Activated B cell treated with CpG ODN at 0.5 μM for 24 hours (primary cell): ENCODE measurements at regions of chr11 and their contacts with region 1.

Region 1: GRCh38 chr11:96461871-96462270 is 72.1 kb downstream of the JRKL start:
- DNase-seq: no peak
- ATAC-seq: no peak
- H3K4me3 Mint-ChIP-seq: no peak overlapping the region
- H3K27ac Mint-ChIP-seq: no peak overlapping the region
- H3K4me1 Mint-ChIP-seq: peaks cover 4% of the 10 kb centered on the region
- H3K27me3 Mint-ChIP-seq: peaks cover 14% of the 10 kb centered on the region
- CTCF ChIP-seq: no peak

Region 2: DNA sequence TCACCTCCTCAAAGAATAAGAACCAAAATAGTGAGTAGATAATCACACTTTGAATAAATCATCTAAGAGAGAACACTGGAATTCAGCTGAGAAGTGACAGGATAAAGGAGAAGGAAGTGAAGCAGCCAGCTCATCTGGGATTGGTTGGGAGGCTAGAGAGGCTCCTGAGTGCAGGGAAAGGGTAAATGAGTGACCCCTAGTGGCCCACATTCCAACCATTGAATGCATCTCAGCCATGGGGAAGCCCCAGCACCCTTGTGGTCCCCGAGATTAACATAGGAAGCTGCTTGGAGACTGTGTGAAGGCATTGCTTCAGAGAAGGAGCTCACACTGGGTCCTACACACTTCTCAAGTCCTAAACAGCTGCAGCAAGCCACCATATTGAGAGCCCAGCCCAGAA is 10.2 kb after region 1 on chr11:
- CTCF ChIA-PET with region 1: interaction called, 10 read pairs
- POLR2A ChIA-PET with region 1: no interaction called
- intact Hi-C with region 1: no loop called
- DNase-seq: no peak
- ATAC-seq: no peak
- H3K4me3 Mint-ChIP-seq: no peak overlapping the region
- H3K27ac Mint-ChIP-seq: no peak overlapping the region
- H3K4me1 Mint-ChIP-seq: no peaks in the 10 kb centered on the region
- H3K27me3 Mint-ChIP-seq: peaks cover 11% of the 10 kb centered on the region
- CTCF ChIP-seq: no peak